ENCODE measurements at regions of chr5 and their contacts with region 1.

Region 1: DNA sequence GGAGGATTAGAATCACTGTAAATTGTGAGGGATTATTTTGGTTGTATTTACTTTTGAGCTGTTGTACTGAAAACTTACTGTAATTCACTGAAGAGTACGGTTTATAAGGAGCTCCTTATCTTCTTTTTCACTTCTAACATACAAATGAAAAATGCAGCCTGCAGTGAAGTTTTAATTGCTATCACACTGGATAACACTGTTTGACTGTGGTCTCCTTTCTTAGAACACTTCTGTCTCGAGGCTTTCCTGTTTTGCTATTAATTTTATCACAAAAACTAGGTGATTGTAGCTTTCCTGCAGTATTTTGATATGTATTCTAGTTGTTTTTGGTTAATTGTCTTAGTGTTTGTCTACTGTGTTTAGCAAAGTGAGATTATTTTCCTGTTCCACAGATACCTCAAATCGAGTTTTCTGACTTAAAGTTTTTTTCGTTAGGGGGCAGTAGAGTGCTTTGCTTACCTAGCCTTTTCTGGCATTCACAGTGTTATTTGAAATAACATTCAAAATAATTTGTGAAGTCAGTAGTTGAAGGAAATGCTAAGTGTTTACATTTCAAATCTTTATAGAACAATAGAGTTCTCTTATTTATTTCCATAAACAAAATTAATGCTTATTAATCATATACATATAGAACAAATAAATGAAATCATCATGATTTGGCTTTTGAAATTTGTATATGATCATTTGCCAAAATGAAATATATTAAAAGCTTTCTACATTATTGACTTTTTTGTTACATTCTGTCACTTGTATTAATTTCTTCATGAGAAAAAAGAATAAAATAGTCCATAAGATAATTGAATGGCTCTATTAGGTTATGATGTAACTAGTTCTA is 52.9 kb downstream of the COMMD10 start:
- DNase-seq: no peak
- ATAC-seq: peak in 1 of 2 donors; percentile 35

Region 2: DNA sequence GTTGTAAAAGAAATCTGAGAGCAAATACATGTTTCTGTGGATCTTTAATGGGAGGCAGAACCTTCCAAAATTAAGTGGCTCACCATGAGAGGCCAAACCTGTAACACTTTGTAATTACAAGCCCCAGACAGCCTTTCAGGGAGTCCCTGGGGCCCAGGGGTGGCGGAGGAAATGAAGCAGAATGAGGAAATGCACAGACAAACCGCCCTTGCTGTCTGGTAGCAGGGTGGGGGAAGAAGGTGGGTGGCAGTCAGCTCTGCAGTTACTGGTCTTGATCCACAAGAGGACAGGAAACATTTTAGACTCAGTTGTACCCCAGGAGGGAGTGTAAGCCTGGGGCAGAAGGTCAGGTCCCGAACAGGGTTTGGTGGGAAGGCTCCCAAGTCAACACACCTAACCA is 98.9 kb before region 1 on chr5:
- intact Hi-C with region 1: no loop called
- DNase-seq: no peak
- ATAC-seq: no peak

Region 3: GRCh38 chr5:116566251-116566650 is 428.5 kb after region 1 on chr5:
- intact Hi-C with region 1: loop called in 1 of 2 experiments (anchors 10 kb)
- DNase-seq: no peak
- ATAC-seq: no peak